Right ventricle myocardium superior (tissue), 1 donor: ENCODE measurements at regions of chr6 and their contacts with region 1.

Region 1: GRCh38 chr6:35202066-35202546 is 11.7 kb upstream of the SCUBE3 start:
- DNase-seq: no peak
- ATAC-seq: peak; percentile 66

Region 2: GRCh38 chr6:34994693-34995092 is 207.4 kb before region 1 on chr6:
- intact Hi-C with region 1: no loop called
- DNase-seq: no peak
- ATAC-seq: no peak

Region 3: DNA sequence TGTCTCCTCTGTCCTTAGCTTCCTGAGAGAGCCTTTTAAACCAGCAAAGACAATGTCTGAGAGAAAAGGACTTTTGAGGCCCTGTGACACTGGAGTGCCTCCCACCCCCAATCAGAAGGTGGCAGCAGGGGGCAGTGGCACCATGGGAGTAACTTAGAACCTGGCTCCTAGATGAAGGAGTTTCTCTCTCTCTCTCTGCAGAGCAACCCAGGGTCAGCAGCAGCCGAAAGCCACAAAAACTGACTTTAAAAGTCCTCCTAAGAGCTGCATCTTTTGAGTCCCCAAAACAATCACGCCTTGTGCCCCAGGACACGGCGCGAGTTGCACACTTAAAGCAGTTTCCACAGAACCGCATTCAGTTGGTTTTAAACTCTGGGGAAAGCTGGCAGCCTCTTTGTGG is 55.7 kb before region 1 on chr6:
- intact Hi-C with region 1: loop called (anchors 2 kb)
- DNase-seq: peak; percentile 64
- ATAC-seq: peak; percentile 93